HCT116 (cell line): ENCODE measurements at regions of chr5 and their contacts with region 1.

Region 1: GRCh38 chr5:64207978-64208377 is 42.3 kb downstream of the RNF180 start:
- DNase-seq: no peak
- ATAC-seq: no peak
- H3K4me3 ChIP-seq: no peak overlapping the region
- H3K27ac ChIP-seq: no peak overlapping the region
- H3K4me1 ChIP-seq: no peaks in the 10 kb centered on the region
- H3K27me3 ChIP-seq: no peaks in the 10 kb centered on the region
- CTCF ChIP-seq: peak in 2 of 3 experiments; percentile 17 to 33; a peak in 3 of 6 replicates
- POLR2A ChIP-seq: no peak
- RAD21 ChIP-seq: 0 out of 2 replicates have a peak, but pooled peaks have one; percentile 15

Region 2: DNA sequence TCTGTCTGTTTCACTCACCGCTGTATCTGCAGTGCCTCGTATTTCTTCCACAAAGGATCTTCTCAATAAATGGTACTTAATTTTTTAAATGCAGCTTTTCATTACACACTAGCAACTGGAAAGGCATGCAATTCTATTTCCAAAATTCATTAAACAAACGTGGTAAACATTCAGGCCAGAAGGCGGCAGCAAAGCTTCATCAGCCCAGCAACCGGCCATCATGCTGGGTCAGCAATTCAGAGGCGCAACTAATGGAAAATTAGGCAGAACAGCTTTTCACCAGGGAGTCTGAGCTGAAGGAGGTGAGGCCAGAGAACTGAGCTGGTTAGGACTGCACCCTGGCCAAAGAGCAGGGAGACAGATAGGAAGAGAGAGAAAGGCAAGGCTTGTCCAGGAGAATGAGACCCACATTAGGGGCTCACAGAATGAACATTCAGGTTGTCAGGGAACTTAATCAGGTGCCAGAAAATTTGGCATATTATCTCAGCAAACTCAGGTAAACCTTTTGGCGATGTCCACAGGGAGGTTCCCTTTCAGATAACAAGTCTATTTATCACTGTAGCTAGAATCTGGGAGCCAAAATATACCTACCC is 60.0 kb before region 1 on chr5:
- CTCF ChIA-PET with region 1: interaction called, 11 read pairs
- POLR2A ChIA-PET with region 1: no interaction called
- RAD21 ChIA-PET with region 1: no interaction called
- intact Hi-C with region 1: no loop called
- DNase-seq: peak; percentile 8
- ATAC-seq: no peak
- H3K4me3 ChIP-seq: no peak overlapping the region
- H3K27ac ChIP-seq: no peak overlapping the region
- H3K4me1 ChIP-seq: no peaks in the 10 kb centered on the region
- H3K27me3 ChIP-seq: no peaks in the 10 kb centered on the region
- CTCF ChIP-seq: peak; percentile 25 to 65 (median 31); a peak in 5 of 6 replicates
- POLR2A ChIP-seq: no peak
- RAD21 ChIP-seq: peak; percentile 59